A549 (cell line): ENCODE measurements at regions of chr11 and their contacts with region 1.

Region 1: DNA sequence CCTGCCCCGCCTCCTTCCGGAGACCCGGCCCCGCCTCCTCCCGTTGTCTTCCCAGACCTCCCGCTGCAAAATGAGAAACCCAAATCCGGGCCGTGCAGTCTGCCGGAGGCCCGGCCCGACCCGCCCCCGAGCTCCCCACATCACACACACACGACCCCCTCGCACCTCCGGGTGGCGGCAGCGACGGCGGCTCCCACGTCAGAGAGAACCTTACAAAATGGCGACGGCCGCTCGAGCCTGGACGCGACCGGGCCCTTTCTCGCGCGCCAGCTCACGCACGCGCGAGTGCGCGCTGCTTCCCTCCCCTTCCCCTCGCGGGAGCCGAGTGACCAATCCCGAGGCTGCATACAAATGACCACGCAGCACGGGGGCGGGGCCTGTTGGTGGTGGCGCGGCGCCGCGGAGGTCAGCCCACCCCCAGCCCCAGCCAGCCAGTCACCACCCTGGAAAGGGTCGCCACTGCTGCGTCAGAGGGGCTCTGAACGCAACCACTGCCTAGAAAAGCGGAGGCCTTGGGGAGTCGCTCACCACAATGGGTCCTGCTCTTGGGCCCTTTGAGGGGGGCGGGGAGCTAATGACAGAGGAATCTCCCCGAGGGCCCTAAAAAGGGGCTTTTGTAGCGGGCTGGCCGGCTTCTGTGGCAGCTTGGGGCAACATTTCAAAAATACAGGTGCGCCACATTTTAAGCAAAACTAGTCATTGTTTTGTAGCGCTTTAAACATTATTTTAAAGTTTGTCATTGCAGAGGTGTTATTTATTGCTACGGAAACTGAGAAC is at the start of gene RBM4B:
- DNase-seq: peak; percentile 96 to 97
- ATAC-seq: peak; percentile 96
- H3K4me3 ChIP-seq: peak within 1 kb of the TSS; percentile 72
- H3K27ac ChIP-seq: peak within 1 kb of the TSS; percentile 94 to 98
- H3K4me1 ChIP-seq: peaks cover 26% of the 10 kb centered on the region
- CTCF ChIP-seq: no peak
- EP300 ChIP-seq: no peak
- POLR2A ChIP-seq: peak; percentile 66
- RAD21 ChIP-seq: no peak
- polyA plus RNA-seq, gene RBM4B: 30.1 and 32.7 TPM in 2 replicates

Region 2: GRCh38 chr11:66421492-66422205 is 256.1 kb before region 1 on chr11:
- CTCF ChIA-PET with region 1: interaction called, 10 read pairs
- POLR2A ChIA-PET with region 1: interaction called, 11 read pairs
- DNase-seq: peak; percentile 83 to 84
- ATAC-seq: peak; percentile 52 to 76; a peak in 4 of 6 replicates
- H3K4me3 ChIP-seq: no peak overlapping the region
- H3K27ac ChIP-seq: no peak overlapping the region
- H3K4me1 ChIP-seq: peaks cover 12% of the 10 kb centered on the region
- CTCF ChIP-seq: no peak
- EP300 ChIP-seq: no peak
- POLR2A ChIP-seq: no peak
- RAD21 ChIP-seq: 0 out of 5 replicates have a peak, but pooled peaks of 1 of the 2 experiments have one; percentile 2

Region 3: DNA sequence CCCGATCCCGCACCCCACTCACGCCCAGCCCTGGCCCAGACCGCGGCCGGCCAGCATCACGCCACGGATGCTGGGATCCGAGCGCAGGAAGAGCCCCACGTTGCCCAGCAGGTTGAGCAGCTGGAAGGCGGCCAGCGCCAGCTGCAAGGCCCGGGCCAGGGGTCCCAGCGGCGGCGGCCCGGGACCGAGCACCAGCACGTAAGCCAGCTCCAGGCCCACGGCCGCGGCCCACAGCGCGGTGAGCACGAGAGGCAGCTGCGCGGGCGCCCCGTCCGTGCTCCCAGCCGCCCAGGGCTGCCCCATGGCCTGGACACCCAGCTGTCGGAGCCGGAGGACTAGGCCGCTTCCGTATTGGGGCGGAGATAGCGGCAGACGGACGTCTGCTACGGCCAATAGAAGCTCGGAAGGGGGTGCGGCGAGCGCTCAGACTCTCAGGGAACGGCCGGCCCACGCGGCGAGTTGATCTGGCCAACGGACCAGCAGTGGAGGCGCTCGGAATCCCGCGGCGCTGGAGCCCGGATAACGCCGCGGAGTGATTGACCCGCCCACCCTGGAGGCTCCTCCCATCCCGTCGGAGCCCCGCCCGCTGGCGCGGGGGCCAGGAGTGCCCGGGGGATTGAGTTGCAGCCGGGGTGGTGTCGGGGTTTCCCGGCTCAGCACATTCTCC is 132.0 kb before region 1 on chr11 and contains the start of gene ZDHHC24:
- CTCF ChIA-PET with region 1: interaction called, 5 read pairs
- POLR2A ChIA-PET with region 1: interaction called, 12 read pairs
- DNase-seq: peak; percentile 97
- ATAC-seq: peak; percentile 89 to 98
- H3K4me3 ChIP-seq: peak within 1 kb of the TSS; percentile 85
- H3K27ac ChIP-seq: peak within 1 kb of the TSS; percentile 85 to 96
- H3K4me1 ChIP-seq: peaks cover 17% of the 10 kb centered on the region
- CTCF ChIP-seq: no peak
- EP300 ChIP-seq: no peak
- POLR2A ChIP-seq: peak; percentile 71
- RAD21 ChIP-seq: no peak
- polyA plus RNA-seq, gene ZDHHC24: 8.4 and 8.6 TPM in 2 replicates

Region 4: GRCh38 chr11:66607126-66607834 is 70.5 kb before region 1 on chr11:
- CTCF ChIA-PET with region 1: interaction called, 8 read pairs
- POLR2A ChIA-PET with region 1: interaction called, 10 read pairs
- DNase-seq: peak in 1 of 2 experiments; percentile 55
- ATAC-seq: peak; percentile 79 to 81
- H3K4me3 ChIP-seq: no peak overlapping the region
- H3K27ac ChIP-seq: peak overlapping the region; percentile 58 to 82
- H3K4me1 ChIP-seq: peaks cover 30% of the 10 kb centered on the region
- CTCF ChIP-seq: no peak
- EP300 ChIP-seq: 0 out of 5 replicates have a peak, but pooled peaks of 1 of the 2 experiments have one; percentile 29
- POLR2A ChIP-seq: no peak
- RAD21 ChIP-seq: no peak

Region 5: GRCh38 chr11:66659763-66660162 is 18.0 kb before region 1 on chr11:
- CTCF ChIA-PET with region 1: interaction called, 17 read pairs
- POLR2A ChIA-PET with region 1: interaction called, 22 read pairs
- DNase-seq: no peak
- ATAC-seq: no peak
- H3K4me3 ChIP-seq: no peak overlapping the region
- H3K27ac ChIP-seq: no peak overlapping the region
- H3K4me1 ChIP-seq: no peaks in the 10 kb centered on the region
- CTCF ChIP-seq: no peak
- EP300 ChIP-seq: no peak
- POLR2A ChIP-seq: no peak
- RAD21 ChIP-seq: no peak

Region 6: DNA sequence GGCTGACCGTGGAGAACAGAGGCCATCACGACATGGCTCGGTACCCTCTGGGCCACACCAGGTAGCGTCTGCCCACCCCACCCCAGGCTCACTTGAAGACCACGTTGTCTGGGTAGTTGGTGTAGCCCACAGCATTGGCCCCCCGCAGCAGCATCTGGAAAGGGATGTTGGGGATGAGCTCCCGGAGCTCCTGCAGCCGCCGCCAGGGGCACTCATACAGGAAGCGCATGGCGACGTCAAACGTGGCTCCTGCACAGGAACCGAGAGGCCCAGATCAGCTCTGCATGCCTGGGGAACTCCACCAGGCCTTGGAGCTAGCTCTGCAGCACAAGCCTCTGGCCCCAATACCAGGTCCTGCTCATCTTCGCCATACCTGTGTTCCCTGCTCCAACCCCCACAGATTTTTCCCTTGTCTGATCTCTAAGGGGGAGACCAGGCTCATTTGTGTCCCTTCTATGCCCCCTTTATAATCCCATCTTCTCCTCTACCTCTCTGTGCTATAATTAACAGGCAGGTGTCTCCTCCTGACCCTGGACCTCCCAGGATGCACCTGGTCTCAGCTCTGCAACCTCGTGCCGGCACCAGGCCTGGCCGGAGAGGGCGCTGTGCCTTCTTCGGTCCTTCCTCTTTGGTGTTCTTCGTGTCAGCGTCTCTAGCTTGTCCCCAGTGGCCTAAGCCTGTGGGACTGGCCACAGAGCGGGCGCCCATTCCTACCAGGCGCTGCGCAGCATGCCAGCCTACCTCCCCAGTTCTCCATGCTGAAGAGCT is 174.1 kb after region 1 on chr11:
- CTCF ChIA-PET with region 1: no interaction called
- POLR2A ChIA-PET with region 1: no interaction called
- DNase-seq: peak in 1 of 2 experiments; percentile 43
- ATAC-seq: no peak
- H3K4me3 ChIP-seq: no peak overlapping the region
- H3K27ac ChIP-seq: no peak overlapping the region
- H3K4me1 ChIP-seq: peaks cover 11% of the 10 kb centered on the region
- CTCF ChIP-seq: no peak
- EP300 ChIP-seq: no peak
- POLR2A ChIP-seq: no peak
- RAD21 ChIP-seq: no peak